ENCODE measurements at regions of chr5 and their contacts with region 1.

Region 1: DNA sequence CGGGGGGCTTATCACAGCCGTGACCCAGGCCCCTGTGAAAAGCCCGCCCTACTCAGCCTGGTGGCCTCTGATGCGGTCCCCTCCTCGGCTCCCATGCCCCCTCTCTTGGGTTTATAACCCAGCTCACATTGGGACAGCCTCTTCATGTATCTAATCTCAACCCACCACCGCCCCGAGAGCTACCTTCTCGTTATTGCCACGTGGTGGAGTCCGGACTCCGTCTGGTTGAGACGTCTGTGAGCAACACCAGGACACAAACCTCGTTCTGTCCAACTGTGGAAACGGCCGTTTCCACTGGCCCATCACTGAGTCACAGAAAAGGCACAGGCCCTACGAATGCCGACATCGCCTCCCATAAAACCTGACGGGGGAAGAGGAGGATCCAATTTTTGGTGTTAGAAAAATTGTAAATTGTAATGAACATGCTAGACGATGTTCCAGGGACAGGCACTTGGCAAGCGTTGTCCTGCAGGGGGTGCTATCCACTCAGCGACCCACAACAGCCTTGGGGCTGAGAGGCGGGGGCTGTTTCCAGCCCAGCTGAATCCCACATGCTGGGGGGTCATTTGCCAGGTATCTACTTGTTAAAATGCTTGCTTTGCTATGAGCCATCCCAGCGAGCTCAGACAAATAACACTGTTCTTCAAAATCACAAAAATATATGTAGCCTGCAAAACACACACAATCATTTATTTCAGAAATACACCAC is 37.3 kb upstream of the N4BP3 start:
- DNase-seq: peak; percentile 70 to 82
- ATAC-seq: peak; percentile 89 to 92
- H3K4me3 ChIP-seq: no peak overlapping the region
- H3K27ac ChIP-seq: no peak overlapping the region
- H3K4me1 ChIP-seq: no peaks in the 10 kb centered on the region
- CTCF ChIP-seq: peak; percentile 96
- EP300 ChIP-seq: no peak
- POLR2A ChIP-seq: no peak
- RAD21 ChIP-seq: peak; percentile 87 to 89

Region 2: DNA sequence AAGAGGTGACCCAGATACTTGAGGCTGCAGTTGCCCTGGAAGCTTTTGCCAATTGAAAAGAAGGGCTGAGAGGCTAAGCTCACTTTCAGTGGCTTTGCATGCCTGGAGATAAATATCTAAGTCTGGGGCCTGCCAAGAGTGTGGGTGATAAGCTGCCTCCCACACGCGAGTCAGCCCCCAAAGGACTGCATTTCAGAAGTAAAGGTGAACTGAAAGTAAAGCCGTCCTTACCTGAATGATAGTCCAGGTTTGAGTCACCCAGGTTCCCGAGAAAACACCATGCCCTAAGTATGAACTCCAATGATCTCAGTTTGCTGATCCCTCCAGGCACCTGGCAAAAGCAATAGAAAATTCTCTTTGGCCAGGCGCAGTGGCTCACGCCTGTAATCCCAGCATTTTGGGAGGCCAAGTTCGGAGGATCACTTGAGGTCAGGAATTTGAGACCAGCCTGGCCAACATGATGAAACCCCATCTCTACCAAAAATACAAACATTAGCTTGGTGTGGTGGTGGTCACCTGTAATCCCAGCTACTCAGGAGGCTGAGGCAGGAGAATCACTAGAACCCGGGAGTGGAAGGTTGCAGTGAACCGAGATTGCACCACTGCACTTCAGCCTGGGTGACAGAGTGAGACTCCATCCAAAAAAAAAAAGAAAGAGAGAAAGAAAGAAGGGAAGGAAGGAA is 15.0 kb after region 1 on chr5:
- CTCF ChIA-PET with region 1: interaction called, 22 read pairs
- POLR2A ChIA-PET with region 1: no interaction called
- DNase-seq: no peak
- ATAC-seq: no peak
- H3K4me3 ChIP-seq: no peak overlapping the region
- H3K27ac ChIP-seq: no peak overlapping the region
- H3K4me1 ChIP-seq: no peaks in the 10 kb centered on the region
- CTCF ChIP-seq: no peak
- EP300 ChIP-seq: no peak
- POLR2A ChIP-seq: no peak
- RAD21 ChIP-seq: no peak

Region 3: GRCh38 chr5:178120868-178121357 is 44.9 kb after region 1 on chr5:
- CTCF ChIA-PET with region 1: interaction called, 33 read pairs
- POLR2A ChIA-PET with region 1: no interaction called
- DNase-seq: peak; percentile 70 to 86
- ATAC-seq: peak; percentile 77 to 92
- H3K4me3 ChIP-seq: no peak overlapping the region
- H3K27ac ChIP-seq: no peak overlapping the region
- H3K4me1 ChIP-seq: no peaks in the 10 kb centered on the region
- CTCF ChIP-seq: peak; percentile 41
- EP300 ChIP-seq: no peak
- POLR2A ChIP-seq: no peak
- RAD21 ChIP-seq: no peak

Region 4: GRCh38 chr5:178137991-178138390 is 62.0 kb after region 1 on chr5:
- CTCF ChIA-PET with region 1: interaction called, 174 read pairs
- POLR2A ChIA-PET with region 1: no interaction called
- DNase-seq: no peak
- ATAC-seq: peak; percentile 11 to 14; a peak in 1 of 6 replicates
- H3K4me3 ChIP-seq: no peak overlapping the region
- H3K27ac ChIP-seq: no peak overlapping the region
- H3K4me1 ChIP-seq: no peaks in the 10 kb centered on the region
- CTCF ChIP-seq: no peak
- EP300 ChIP-seq: no peak
- POLR2A ChIP-seq: no peak
- RAD21 ChIP-seq: no peak

Region 5: GRCh38 chr5:178153573-178154343 is 77.8 kb after region 1 on chr5 and contains the start of gene NHP2:
- CTCF ChIA-PET with region 1: interaction called, 174 read pairs
- POLR2A ChIA-PET with region 1: no interaction called
- DNase-seq: peak; percentile 95 to 98
- ATAC-seq: peak; percentile 97
- H3K4me3 ChIP-seq: peak within 1 kb of the TSS; percentile 94
- H3K27ac ChIP-seq: peak within 1 kb of the TSS; percentile 85 to 88
- H3K4me1 ChIP-seq: peaks cover 13% of the 10 kb centered on the region
- CTCF ChIP-seq: no peak
- EP300 ChIP-seq: no peak
- POLR2A ChIP-seq: peak; percentile 46
- RAD21 ChIP-seq: no peak
- polyA plus RNA-seq, gene NHP2: 177 and 205 TPM in 2 replicates

Measured in A549 (cell line).